B cell (primary cell): ENCODE measurements at regions of chr11 and their contacts with region 1.

Region 1: DNA sequence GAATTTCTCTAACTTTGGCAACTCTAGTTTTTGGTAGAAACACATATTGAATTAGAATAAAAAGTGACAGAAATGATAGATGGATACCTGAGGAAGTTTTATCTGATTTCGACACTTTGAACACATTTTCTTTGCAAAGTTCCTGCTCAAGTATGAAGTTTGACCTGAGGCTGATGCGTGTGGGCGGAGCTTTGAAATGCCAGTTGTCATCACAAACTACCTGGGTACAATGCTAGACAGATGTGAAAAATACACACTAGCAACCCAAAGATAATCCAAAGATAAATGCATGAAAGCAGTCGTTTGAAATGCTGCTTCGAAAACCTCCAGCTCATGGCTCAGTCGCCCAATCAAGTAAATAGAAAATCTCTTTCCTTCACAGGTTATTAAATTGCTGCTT is 54.8 kb downstream of the CD44 start:
- DNase-seq: no peak
- ATAC-seq: no peak
- H3K4me3 ChIP-seq: no peak overlapping the region
- H3K4me3 Mint-ChIP-seq: no peak overlapping the region
- H3K27ac ChIP-seq: peak overlapping the region in 1 of 2 donors; percentile 28
- H3K27ac Mint-ChIP-seq: peak overlapping the region; percentile 37
- H3K4me1 ChIP-seq: no peaks in the 10 kb centered on the region
- H3K4me1 Mint-ChIP-seq: peaks cover 16% of the 10 kb centered on the region
- H3K27me3 ChIP-seq: no peaks in the 10 kb centered on the region
- H3K27me3 Mint-ChIP-seq: no peaks in the 10 kb centered on the region
- CTCF ChIP-seq: no peak

Region 2: DNA sequence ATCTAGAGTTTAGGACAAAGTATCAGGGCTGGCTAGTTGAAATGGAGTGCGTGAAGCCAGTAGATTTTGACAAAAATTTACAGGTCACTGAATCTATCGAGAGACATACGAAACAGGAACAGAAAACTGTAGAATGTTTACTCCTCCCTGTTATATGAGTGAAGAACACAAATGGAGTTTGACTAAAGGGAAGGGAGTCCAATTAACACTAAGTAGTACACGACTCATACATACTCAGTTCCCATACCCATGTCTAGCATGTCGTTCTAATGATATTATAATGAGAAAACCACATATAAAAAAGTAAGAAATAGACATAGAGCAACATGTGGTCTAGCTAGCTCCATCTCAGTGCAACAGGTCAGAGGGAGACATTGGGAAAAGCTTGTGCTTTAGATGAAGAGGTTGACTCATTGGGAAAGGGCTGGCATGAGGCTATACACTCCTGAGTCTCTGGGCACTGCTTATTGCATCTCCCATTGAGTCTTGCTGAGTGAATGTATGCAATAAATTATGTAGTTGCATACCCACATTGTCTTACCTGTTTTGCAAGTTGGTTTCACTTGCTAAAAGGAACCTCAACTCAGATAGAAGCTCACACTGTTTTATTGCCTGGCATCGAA is 11.3 kb before region 1 on chr11:
- CTCF ChIA-PET with region 1: interaction called, 4 read pairs
- POLR2A ChIA-PET with region 1: interaction called, 4 read pairs
- intact Hi-C with region 1: loop called (anchors 1 kb)
- DNase-seq: peak; percentile 67
- ATAC-seq: peak; percentile 84
- H3K4me3 ChIP-seq: peak overlapping the region in 3 of 5 experiments; percentile 1 to 41 (median 6)
- H3K4me3 Mint-ChIP-seq: peak overlapping the region; percentile 81
- H3K27ac ChIP-seq: peak overlapping the region; percentile 68 to 80
- H3K27ac Mint-ChIP-seq: peak overlapping the region; percentile 90
- H3K4me1 ChIP-seq: peaks cover 34 to 41% of the 10 kb centered on the region in 2 donors
- H3K4me1 Mint-ChIP-seq: peaks cover 67% of the 10 kb centered on the region
- H3K27me3 ChIP-seq: no peaks in the 10 kb centered on the region
- H3K27me3 Mint-ChIP-seq: no peaks in the 10 kb centered on the region
- CTCF ChIP-seq: no peak

Region 3: DNA sequence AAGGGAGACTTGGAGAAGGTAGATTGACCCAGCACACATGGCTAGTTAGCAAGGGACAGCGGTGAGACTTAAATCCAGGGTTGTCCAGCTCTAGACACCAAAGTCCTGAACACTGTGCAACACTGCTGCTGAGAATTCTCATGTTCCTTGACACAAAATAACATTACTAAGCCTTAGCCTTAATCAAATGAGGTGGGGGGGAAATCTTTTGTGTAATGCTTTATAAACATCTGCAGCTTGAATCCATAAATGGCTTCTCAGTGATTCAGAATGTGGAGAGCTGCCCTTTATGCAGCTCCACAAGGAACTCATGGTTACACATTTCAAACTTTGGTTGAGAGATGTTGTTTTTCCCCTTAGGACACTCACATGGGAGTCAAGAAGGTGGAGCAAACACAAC is 25.2 kb after region 1 on chr11:
- CTCF ChIA-PET with region 1: no interaction called
- POLR2A ChIA-PET with region 1: no interaction called
- intact Hi-C with region 1: no loop called
- DNase-seq: no peak
- ATAC-seq: no peak
- H3K4me3 ChIP-seq: no peak overlapping the region
- H3K4me3 Mint-ChIP-seq: no peak overlapping the region
- H3K27ac ChIP-seq: peak overlapping the region in 1 of 2 donors; percentile 9
- H3K27ac Mint-ChIP-seq: peak overlapping the region; percentile 64
- H3K4me1 ChIP-seq: peaks cover 22 to 31% of the 10 kb centered on the region in 2 donors
- H3K4me1 Mint-ChIP-seq: peaks cover 38% of the 10 kb centered on the region
- H3K27me3 ChIP-seq: no peaks in the 10 kb centered on the region
- H3K27me3 Mint-ChIP-seq: no peaks in the 10 kb centered on the region
- CTCF ChIP-seq: no peak

Region 4: DNA sequence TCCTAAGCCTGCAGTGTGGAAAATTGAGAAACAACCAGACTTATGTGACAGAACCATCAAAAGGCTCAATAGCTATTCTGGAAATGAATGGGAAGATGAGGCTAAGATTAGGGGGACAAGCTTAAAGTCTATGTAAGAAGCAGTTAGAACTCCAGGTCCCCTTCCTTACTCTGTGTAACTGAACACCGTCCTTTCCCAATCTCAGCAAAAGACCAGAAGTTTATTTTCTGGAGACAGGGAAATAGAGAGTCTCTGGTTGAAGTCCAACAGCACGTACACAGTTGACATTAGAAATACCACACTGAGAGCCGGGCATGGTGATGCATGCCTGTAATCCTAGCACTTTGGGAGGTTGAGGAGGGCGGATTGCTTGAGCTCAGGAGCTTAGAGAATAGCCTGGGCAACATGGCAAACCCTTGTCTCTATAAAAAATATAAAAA is 39.1 kb after region 1 on chr11:
- CTCF ChIA-PET with region 1: interaction called, 6 read pairs
- POLR2A ChIA-PET with region 1: no interaction called
- intact Hi-C with region 1: loop called (anchors 5 kb)
- DNase-seq: no peak
- ATAC-seq: no peak
- H3K4me3 ChIP-seq: no peak overlapping the region
- H3K4me3 Mint-ChIP-seq: no peak overlapping the region
- H3K27ac ChIP-seq: no peak overlapping the region
- H3K27ac Mint-ChIP-seq: no peak overlapping the region
- H3K4me1 ChIP-seq: peaks cover 3 to 5% of the 10 kb centered on the region in 2 donors
- H3K4me1 Mint-ChIP-seq: peaks cover 23% of the 10 kb centered on the region
- H3K27me3 ChIP-seq: no peaks in the 10 kb centered on the region
- H3K27me3 Mint-ChIP-seq: no peaks in the 10 kb centered on the region
- CTCF ChIP-seq: no peak

Region 5: GRCh38 chr11:35272391-35272902 is 78.7 kb after region 1 on chr11:
- CTCF ChIA-PET with region 1: no interaction called
- POLR2A ChIA-PET with region 1: no interaction called
- intact Hi-C with region 1: no loop called
- DNase-seq: no peak
- ATAC-seq: peak; percentile 31
- H3K4me3 ChIP-seq: no peak overlapping the region
- H3K4me3 Mint-ChIP-seq: peak overlapping the region; percentile 2
- H3K27ac ChIP-seq: no peak overlapping the region
- H3K27ac Mint-ChIP-seq: peak overlapping the region; percentile 27
- H3K4me1 ChIP-seq: peaks cover 16 to 17% of the 10 kb centered on the region in 2 donors
- H3K4me1 Mint-ChIP-seq: peaks cover 29% of the 10 kb centered on the region
- H3K27me3 ChIP-seq: no peaks in the 10 kb centered on the region
- H3K27me3 Mint-ChIP-seq: no peaks in the 10 kb centered on the region
- CTCF ChIP-seq: no peak